ENCODE measurements at regions of chr3 and their contacts with region 1.

Region 1: GRCh38 chr3:71226565-71227269 is 356.8 kb downstream of the FOXP1 start:
- DNase-seq: peak; percentile 81
- ATAC-seq: peak; percentile 78 to 85 (median 85)
- H3K4me3 ChIP-seq: peak overlapping the region; percentile 2
- H3K4me3 Mint-ChIP-seq: peak overlapping the region; percentile 96
- H3K27ac ChIP-seq: peak overlapping the region; percentile 52
- H3K27ac Mint-ChIP-seq: peak overlapping the region; percentile 82 to 95
- H3K4me1 ChIP-seq: peaks cover 22% of the 10 kb centered on the region
- H3K4me1 Mint-ChIP-seq: peaks cover 24 to 27% of the 10 kb centered on the region in 2 donors
- H3K27me3 ChIP-seq: no peaks in the 10 kb centered on the region
- H3K27me3 Mint-ChIP-seq: peaks cover 5 to 13% of the 10 kb centered on the region in 2 donors
- CTCF ChIP-seq: no peak

Region 2: GRCh38 chr3:71064288-71064955 is 162.3 kb before region 1 on chr3:
- intact Hi-C with region 1: loop called (anchors 1 kb)
- DNase-seq: peak; percentile 64 to 80
- ATAC-seq: peak; percentile 37 to 68 (median 55)
- H3K4me3 ChIP-seq: peak overlapping the region; percentile 55
- H3K4me3 Mint-ChIP-seq: no peak overlapping the region
- H3K27ac ChIP-seq: peak overlapping the region; percentile 82
- H3K27ac Mint-ChIP-seq: no peak overlapping the region
- H3K4me1 ChIP-seq: peaks cover 33% of the 10 kb centered on the region
- H3K4me1 Mint-ChIP-seq: peaks cover 35 to 38% of the 10 kb centered on the region in 2 donors
- H3K27me3 ChIP-seq: no peaks in the 10 kb centered on the region
- H3K27me3 Mint-ChIP-seq: no peaks in the 10 kb centered on the region
- CTCF ChIP-seq: no peak

Region 3: DNA sequence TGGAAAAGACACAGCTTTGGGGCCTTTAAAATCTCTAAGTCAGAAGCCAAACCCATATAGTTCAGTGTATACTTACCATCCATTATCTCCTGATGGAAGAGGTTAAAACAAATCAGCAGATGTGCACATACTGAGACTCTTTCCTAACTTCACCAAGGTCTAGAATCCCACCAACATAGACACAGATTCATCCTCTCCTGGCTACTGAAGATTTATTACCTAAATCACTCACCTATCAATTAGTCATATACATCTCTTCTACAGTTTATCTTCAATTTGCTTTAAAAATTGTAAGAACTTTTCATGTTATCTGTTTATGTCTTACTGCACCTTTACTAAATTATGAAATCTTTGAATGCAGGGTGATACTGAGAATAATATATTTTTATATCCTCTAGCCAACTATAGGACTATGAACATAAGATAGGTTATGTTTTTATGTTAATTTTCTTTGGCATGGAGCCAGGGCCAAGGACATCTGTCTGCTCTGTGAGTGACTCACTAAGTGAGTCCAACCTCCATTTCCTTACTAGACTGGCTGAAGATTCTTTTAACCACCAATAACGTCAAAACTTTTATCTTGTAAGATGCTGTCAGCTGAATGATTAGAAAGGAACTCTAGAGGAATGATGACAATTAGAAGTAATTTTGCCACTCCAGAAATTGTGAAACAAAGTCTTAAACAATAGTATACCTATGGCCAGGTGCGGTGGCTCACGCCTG is 40.8 kb before region 1 on chr3:
- intact Hi-C with region 1: loop called (anchors 5 kb)
- DNase-seq: peak in 1 of 2 donors; percentile 63
- ATAC-seq: peak; percentile 78 to 86 (median 82)
- H3K4me3 ChIP-seq: no peak overlapping the region
- H3K4me3 Mint-ChIP-seq: no peak overlapping the region
- H3K27ac ChIP-seq: no peak overlapping the region
- H3K27ac Mint-ChIP-seq: peak overlapping the region in 1 of 2 donors; percentile 26
- H3K4me1 ChIP-seq: no peaks in the 10 kb centered on the region
- H3K4me1 Mint-ChIP-seq: peaks cover 0 to 8% of the 10 kb centered on the region in 2 donors
- H3K27me3 ChIP-seq: no peaks in the 10 kb centered on the region
- H3K27me3 Mint-ChIP-seq: no peaks in the 10 kb centered on the region
- CTCF ChIP-seq: no peak

Region 4: DNA sequence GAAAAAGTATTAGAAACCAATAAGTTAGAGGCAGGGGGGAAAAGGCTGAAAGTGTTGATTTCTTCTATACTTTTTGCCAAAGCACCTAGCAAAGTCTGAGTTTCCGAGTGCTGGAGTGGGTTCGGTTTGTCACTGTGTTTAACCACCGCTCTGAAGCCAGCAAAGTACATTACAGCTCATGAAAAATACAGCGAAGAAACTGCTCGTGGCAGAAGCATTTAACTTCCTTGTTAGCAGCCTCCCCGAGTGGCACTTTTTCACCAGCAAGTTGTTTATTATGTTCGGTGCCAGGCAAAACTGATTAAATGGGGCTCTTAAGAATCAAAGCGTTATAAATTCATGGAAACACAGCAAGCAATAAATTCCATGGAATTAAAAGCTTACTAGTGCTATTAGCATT is 43.2 kb after region 1 on chr3:
- intact Hi-C with region 1: no loop called
- DNase-seq: peak; percentile 17 to 50
- ATAC-seq: peak; percentile 52 to 85 (median 68)
- H3K4me3 ChIP-seq: no peak overlapping the region
- H3K4me3 Mint-ChIP-seq: peak overlapping the region; percentile 65
- H3K27ac ChIP-seq: peak overlapping the region; percentile 31
- H3K27ac Mint-ChIP-seq: peak overlapping the region; percentile 80 to 83
- H3K4me1 ChIP-seq: peaks cover 3% of the 10 kb centered on the region
- H3K4me1 Mint-ChIP-seq: peaks cover 14 to 16% of the 10 kb centered on the region in 2 donors
- H3K27me3 ChIP-seq: no peaks in the 10 kb centered on the region
- H3K27me3 Mint-ChIP-seq: no peaks in the 10 kb centered on the region
- CTCF ChIP-seq: no peak

Region 5: DNA sequence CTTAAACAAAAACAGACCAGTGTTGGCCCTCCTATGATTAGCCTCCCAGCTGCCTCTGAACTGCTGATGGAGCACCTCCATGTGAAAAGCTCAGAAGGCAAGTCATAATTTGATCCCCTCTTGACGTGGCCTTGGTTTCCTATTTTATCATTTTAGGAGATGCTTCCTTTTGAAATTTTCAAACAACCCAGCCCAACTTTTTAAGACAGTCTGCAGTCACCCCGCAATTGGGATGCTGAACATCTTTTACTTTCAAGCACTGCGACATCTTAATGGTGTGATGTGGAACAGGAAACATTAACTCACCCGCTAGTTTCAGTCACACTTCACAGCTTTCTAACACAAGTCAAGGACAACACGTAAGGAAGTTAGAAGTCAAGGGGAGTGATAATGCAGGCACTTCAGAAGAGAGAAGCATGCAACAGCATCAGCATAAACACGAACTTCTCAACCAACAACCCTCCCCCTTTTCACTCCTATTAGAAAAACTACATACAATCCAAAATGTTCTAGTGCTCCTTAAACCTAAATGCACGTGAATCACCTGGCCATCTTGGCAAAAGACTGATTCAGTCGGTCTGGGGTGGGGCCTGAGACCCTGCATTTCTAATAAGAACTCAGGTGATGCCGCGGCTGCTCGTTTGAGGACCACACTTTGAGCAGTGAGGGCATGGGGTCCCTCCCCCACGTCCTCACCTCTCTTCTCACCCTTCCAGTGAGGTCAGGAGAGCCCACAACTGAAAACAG is 195.3 kb after region 1 on chr3:
- intact Hi-C with region 1: loop called (anchors 2 kb)
- DNase-seq: peak; percentile 28 to 79
- ATAC-seq: peak; percentile 92 to 94 (median 93)
- H3K4me3 ChIP-seq: no peak overlapping the region
- H3K4me3 Mint-ChIP-seq: peak overlapping the region; percentile 70
- H3K27ac ChIP-seq: peak overlapping the region; percentile 91
- H3K27ac Mint-ChIP-seq: peak overlapping the region; percentile 93 to 95
- H3K4me1 ChIP-seq: peaks cover 26% of the 10 kb centered on the region
- H3K4me1 Mint-ChIP-seq: peaks cover 47 to 56% of the 10 kb centered on the region in 2 donors
- H3K27me3 ChIP-seq: no peaks in the 10 kb centered on the region
- H3K27me3 Mint-ChIP-seq: no peaks in the 10 kb centered on the region
- CTCF ChIP-seq: no peak

Measured in natural killer cell (primary cell).